ENCODE measurements at regions of chr11 and their contacts with region 1.

Region 1: DNA sequence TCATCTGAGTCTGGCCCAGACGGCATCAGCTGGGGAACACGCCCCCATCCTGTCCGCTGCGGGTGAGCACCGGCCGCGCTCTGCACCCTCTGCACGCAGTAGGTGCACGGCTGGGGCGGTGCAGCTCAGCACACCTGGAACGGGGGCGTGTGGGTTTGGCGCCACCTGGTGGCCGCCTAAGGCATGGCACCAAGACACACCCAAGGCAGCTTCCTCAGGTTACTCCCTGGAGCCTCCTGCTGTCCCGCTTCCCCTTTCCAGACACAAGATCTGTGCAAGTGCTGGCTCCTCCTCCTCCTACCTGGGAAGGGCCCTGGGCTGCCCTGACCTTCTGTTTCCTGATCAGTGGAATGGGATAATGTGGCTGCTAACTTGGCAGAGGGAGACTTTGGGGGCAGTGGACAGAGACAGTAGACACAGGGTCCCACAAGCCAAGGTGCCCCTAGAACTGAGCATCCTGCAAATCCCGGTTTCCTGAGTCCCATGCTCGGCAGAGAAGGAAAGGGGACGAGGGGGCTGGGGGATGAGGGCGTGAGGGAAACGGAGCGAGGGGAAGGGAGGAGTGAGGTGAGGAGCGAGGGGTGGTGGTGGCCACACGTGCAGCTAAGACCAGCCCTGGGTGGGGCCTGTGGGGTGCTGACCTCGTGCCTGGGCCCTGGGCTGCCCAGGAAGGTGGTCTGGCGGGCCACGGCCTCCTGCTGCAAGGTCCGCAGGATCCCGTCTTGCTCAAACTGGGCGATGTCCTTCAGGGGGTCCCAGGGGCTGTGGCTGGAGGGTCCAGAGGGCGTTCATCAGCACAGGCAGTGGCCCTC is 34.8 kb upstream of the CARS1 start:
- DNase-seq: peak; percentile 88 to 92
- H3K4me3 ChIP-seq: no peak overlapping the region
- H3K4me3 Mint-ChIP-seq: no peak overlapping the region
- H3K27ac Mint-ChIP-seq: no peak overlapping the region
- H3K4me1 ChIP-seq: no peaks in the 10 kb centered on the region
- H3K4me1 Mint-ChIP-seq: no peaks in the 10 kb centered on the region
- H3K27me3 ChIP-seq: no peaks in the 10 kb centered on the region
- H3K27me3 Mint-ChIP-seq: peaks cover 19% of the 10 kb centered on the region
- CTCF ChIP-seq: peak; percentile 98

Region 2: GRCh38 chr11:2489083-2489482 is 602.9 kb before region 1 on chr11:
- CTCF ChIA-PET with region 1: no interaction called
- POLR2A ChIA-PET with region 1: no interaction called
- intact Hi-C with region 1: no loop called
- DNase-seq: no peak
- H3K4me3 ChIP-seq: no peak overlapping the region
- H3K4me3 Mint-ChIP-seq: no peak overlapping the region
- H3K27ac Mint-ChIP-seq: no peak overlapping the region
- H3K4me1 ChIP-seq: no peaks in the 10 kb centered on the region
- H3K4me1 Mint-ChIP-seq: no peaks in the 10 kb centered on the region
- H3K27me3 ChIP-seq: no peaks in the 10 kb centered on the region
- H3K27me3 Mint-ChIP-seq: peaks cover 6% of the 10 kb centered on the region
- CTCF ChIP-seq: no peak

Region 3: DNA sequence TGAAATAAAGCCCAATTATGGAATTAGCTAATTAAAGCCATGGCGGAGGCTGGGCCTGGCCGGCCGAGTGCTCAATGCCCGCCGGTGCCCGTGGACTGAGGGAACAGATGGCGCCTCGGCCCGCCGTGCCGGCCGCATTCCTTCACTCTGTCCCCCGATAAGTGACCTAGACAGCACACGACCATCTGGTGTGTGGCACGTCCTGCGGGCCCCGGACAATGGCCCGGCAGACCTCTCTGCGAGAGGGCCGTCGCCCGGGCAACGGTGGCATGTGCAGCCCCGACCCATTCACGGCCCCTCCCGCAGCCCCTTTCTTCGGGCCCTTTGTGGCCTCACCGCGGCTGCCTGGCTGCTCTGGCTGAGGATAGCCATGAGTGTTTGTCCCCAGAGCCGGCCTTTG is 241.6 kb before region 1 on chr11:
- CTCF ChIA-PET with region 1: no interaction called
- POLR2A ChIA-PET with region 1: no interaction called
- intact Hi-C with region 1: no loop called
- DNase-seq: no peak
- H3K4me3 ChIP-seq: no peak overlapping the region
- H3K4me3 Mint-ChIP-seq: no peak overlapping the region
- H3K27ac Mint-ChIP-seq: no peak overlapping the region
- H3K4me1 ChIP-seq: peaks cover 6% of the 10 kb centered on the region; the same call in 1 of the 2 replicates
- H3K4me1 Mint-ChIP-seq: peaks cover 5% of the 10 kb centered on the region
- H3K27me3 ChIP-seq: no peaks in the 10 kb centered on the region
- H3K27me3 Mint-ChIP-seq: no peaks in the 10 kb centered on the region
- CTCF ChIP-seq: no peak

Region 4: DNA sequence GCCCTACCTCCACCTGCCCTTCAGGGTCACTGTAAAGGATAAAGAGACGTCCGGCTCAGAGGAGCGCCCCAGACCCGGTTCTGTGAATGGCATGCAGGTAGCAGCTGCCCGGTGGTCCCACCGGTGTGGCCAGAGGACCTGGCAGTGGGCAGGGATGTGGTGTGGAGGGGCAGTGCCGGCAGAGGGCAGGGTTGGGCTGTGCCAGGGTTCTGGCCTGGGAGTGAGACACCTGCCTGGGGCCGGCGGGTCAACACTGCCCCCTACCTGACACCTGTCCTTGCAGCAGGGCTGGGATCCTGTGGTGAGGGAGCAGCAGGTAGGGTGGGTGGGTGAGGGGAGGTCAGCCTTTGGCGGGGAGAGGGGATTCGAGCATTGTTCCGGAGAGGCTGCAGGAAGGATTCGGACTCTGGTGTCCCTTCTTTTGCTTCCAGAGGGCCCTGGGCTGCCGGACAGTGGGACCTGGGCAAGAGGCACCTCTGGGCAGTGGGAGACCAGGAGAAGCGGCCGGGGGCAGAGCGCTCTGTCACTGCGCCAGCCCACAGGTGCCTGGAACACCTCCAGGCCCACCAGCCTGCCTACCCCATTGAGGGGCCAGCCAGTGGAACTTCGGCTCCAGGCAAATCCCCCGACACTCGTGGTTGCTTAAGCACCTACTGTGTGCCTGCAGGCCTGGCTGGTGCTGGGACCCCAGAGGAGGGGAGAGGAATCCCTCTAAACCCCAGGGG is 161.1 kb before region 1 on chr11:
- CTCF ChIA-PET with region 1: interaction called, 9 read pairs
- POLR2A ChIA-PET with region 1: no interaction called
- intact Hi-C with region 1: loop called (anchors 5 kb)
- DNase-seq: peak; percentile 92 to 95
- H3K4me3 ChIP-seq: peak overlapping the region; percentile 91
- H3K4me3 Mint-ChIP-seq: peak overlapping the region; percentile 73
- H3K27ac Mint-ChIP-seq: peak overlapping the region; percentile 79
- H3K4me1 ChIP-seq: peaks cover 19% of the 10 kb centered on the region
- H3K4me1 Mint-ChIP-seq: no peaks in the 10 kb centered on the region
- H3K27me3 ChIP-seq: 0 out of 2 replicates have a peak, but pooled peaks cover 2% of the 10 kb centered on the region
- H3K27me3 Mint-ChIP-seq: no peaks in the 10 kb centered on the region
- CTCF ChIP-seq: peak; percentile 80 to 95

Region 5: GRCh38 chr11:2975594-2975993 is 116.4 kb before region 1 on chr11:
- CTCF ChIA-PET with region 1: interaction called, 12 read pairs
- POLR2A ChIA-PET with region 1: no interaction called
- intact Hi-C with region 1: no loop called
- DNase-seq: peak in 1 of 2 experiments; percentile 43
- H3K4me3 ChIP-seq: no peak overlapping the region
- H3K4me3 Mint-ChIP-seq: no peak overlapping the region
- H3K27ac Mint-ChIP-seq: no peak overlapping the region
- H3K4me1 ChIP-seq: no peaks in the 10 kb centered on the region
- H3K4me1 Mint-ChIP-seq: no peaks in the 10 kb centered on the region
- H3K27me3 ChIP-seq: no peaks in the 10 kb centered on the region
- H3K27me3 Mint-ChIP-seq: no peaks in the 10 kb centered on the region
- CTCF ChIP-seq: peak; percentile 54 to 67

Region 6: DNA sequence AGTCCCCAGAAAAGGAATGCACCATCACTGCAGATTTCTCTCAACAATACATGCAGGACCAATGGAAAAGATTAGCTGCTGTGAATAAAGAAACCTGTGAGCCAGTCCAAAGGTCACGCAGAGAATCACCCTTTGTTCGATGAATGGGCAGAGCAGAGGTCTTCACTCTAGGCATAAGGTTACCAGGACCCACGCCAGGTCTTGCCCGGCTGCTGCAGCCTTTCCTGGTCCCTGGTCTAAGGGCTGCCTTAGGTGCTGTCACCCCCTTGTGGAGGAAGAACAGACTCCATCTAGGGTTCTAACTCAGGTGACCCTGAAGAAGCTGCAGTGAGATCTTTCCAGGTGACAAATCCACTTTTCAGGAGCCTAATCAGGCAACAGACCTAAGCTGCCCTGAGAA is 70.9 kb before region 1 on chr11:
- CTCF ChIA-PET with region 1: interaction called, 7 read pairs
- POLR2A ChIA-PET with region 1: no interaction called
- intact Hi-C with region 1: loop called (anchors 5 kb)
- DNase-seq: peak in 1 of 2 experiments; percentile 59
- H3K4me3 ChIP-seq: no peak overlapping the region
- H3K4me3 Mint-ChIP-seq: no peak overlapping the region
- H3K27ac Mint-ChIP-seq: no peak overlapping the region
- H3K4me1 ChIP-seq: peaks cover 9% of the 10 kb centered on the region; the same call in 1 of the 2 replicates
- H3K4me1 Mint-ChIP-seq: peaks cover 24% of the 10 kb centered on the region
- H3K27me3 ChIP-seq: no peaks in the 10 kb centered on the region
- H3K27me3 Mint-ChIP-seq: no peaks in the 10 kb centered on the region
- CTCF ChIP-seq: peak; percentile 53 to 86

Region 7: GRCh38 chr11:3037040-3037944 is 54.7 kb before region 1 on chr11:
- CTCF ChIA-PET with region 1: interaction called, 83 read pairs
- POLR2A ChIA-PET with region 1: no interaction called
- intact Hi-C with region 1: loop called (anchors 1 kb)
- DNase-seq: peak; percentile 74 to 81
- H3K4me3 ChIP-seq: no peak overlapping the region
- H3K4me3 Mint-ChIP-seq: no peak overlapping the region
- H3K27ac Mint-ChIP-seq: no peak overlapping the region
- H3K4me1 ChIP-seq: no peaks in the 10 kb centered on the region
- H3K4me1 Mint-ChIP-seq: peaks cover 2% of the 10 kb centered on the region
- H3K27me3 ChIP-seq: no peaks in the 10 kb centered on the region
- H3K27me3 Mint-ChIP-seq: no peaks in the 10 kb centered on the region
- CTCF ChIP-seq: peak; percentile 88

Region 8: DNA sequence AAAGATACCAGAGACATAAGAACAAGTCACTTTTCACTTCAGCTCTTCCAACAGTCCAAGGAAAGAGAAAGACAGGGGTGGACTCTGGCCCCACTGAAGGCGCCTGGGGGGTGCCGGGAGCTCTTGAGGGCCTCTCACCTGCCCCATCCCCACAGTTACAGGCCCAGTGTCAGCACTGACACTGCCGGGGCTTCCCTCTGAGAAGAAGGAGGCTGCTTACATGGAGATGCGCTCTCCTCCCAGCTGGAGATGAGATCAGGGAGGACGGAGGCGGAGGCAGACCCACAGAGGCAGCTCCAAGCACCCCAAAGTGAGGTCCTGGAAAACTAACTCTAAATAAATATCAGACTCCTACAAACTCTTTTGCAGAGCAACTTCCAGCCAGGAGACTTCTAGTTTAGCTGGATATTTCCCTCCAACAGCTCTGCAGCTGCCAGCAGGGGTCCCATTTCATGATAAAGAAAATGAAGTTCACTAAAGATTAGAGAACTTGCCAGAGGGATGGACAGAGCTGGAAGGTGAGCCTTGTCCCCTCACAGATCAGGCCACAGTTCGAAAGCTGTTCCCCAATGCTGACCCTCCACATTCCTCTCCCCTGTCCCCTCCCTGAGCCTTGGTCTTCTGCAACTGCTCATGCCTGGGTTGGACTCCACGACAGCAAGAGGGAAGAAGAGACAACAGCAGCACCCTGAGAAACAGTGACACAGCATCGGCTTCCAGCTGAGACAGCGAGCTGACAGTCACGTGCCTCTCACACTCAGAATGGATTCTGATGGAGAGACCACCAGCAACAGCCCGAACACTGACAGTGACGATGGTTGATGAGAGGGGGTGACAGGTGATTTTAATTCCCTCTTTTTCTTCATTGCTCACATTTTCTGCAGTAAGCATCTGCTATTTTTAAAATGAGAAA is 40.5 kb before region 1 on chr11:
- CTCF ChIA-PET with region 1: interaction called, 8 read pairs
- POLR2A ChIA-PET with region 1: no interaction called
- intact Hi-C with region 1: loop called (anchors 1 kb)
- DNase-seq: no peak
- H3K4me3 ChIP-seq: no peak overlapping the region
- H3K4me3 Mint-ChIP-seq: no peak overlapping the region
- H3K27ac Mint-ChIP-seq: no peak overlapping the region
- H3K4me1 ChIP-seq: no peaks in the 10 kb centered on the region
- H3K4me1 Mint-ChIP-seq: no peaks in the 10 kb centered on the region
- H3K27me3 ChIP-seq: no peaks in the 10 kb centered on the region
- H3K27me3 Mint-ChIP-seq: no peaks in the 10 kb centered on the region
- CTCF ChIP-seq: peak in 1 of 2 experiments; percentile 19

Region 9: DNA sequence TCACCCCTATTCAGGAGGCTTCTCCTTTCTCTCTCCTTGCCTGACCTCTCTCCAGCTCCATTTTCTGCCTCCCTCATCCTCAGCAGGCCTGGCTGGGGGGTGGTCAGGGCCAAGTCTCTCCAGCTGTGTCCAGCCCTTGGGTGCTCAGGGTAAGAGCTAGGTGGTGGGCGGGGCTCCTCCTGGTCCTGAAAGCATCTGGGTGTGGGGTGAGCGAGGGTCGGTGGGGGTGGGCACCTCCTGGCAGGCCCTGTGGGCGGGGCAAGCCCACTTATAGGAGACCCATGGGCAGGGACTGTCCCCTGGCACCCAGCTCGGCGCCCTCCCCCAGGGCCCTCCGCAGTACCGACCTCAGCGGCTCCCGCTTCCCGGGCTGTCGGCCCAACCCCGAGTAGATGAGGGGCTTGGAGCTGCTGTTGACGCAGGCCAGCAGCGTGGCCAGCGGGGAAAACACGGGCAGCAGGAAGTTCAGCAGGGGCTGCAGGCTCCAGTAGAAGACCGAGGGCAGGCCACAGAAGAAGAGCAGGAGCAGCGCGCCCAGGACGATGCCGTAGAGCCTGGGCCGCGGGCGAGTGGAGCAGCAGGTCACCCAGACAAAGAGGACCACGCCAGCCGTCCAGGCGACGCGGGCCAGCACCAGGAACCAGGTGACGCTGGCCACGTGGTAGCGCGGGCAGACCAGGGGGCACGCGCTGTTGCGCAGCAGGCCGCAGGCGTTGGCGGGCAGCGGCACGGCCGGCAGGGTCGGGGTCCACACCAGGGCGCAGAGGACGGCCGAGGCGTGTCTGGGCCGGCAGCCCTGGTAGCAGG is 125.9 kb after region 1 on chr11:
- CTCF ChIA-PET with region 1: no interaction called
- POLR2A ChIA-PET with region 1: no interaction called
- intact Hi-C with region 1: loop called (anchors 5 kb)
- DNase-seq: peak in 1 of 2 experiments; percentile 29
- H3K4me3 ChIP-seq: no peak overlapping the region
- H3K4me3 Mint-ChIP-seq: no peak overlapping the region
- H3K27ac Mint-ChIP-seq: no peak overlapping the region
- H3K4me1 ChIP-seq: no peaks in the 10 kb centered on the region
- H3K4me1 Mint-ChIP-seq: no peaks in the 10 kb centered on the region
- H3K27me3 ChIP-seq: peaks cover 4% of the 10 kb centered on the region
- H3K27me3 Mint-ChIP-seq: peaks cover 44% of the 10 kb centered on the region
- CTCF ChIP-seq: no peak

Region 10: DNA sequence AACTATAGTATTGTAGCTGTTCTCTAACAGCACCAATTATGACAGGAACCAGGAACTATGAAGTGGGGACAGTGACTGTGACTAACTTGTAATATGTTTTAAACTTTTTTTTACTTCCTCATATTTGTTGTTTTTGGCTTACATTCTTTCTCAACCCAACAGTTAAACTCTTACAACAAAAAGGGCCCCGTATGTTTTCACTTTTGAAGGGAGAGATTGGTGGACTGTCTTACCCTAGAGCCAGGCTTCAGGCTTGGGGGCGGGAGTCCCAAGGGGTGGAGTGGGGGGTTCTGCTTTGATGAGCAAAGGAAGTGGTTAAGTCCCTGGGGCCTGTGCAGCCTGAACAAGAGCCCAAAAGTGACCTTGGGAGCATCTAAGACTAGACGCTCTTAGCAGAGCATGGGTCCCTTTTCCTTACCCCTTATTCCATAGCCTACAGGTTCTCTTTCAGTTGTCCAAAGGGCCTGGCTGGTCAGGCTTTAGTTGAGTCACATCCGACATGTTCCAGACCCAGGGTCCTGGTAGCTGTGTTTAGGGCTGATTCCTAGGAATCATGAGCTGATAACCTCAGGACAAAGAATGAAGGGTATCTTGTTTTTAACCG is 802.2 kb after region 1 on chr11:
- CTCF ChIA-PET with region 1: no interaction called
- POLR2A ChIA-PET with region 1: no interaction called
- intact Hi-C with region 1: no loop called
- DNase-seq: no peak
- H3K4me3 ChIP-seq: no peak overlapping the region
- H3K4me3 Mint-ChIP-seq: no peak overlapping the region
- H3K27ac Mint-ChIP-seq: no peak overlapping the region
- H3K4me1 ChIP-seq: no peaks in the 10 kb centered on the region; the same call in 1 of the 2 replicates
- H3K4me1 Mint-ChIP-seq: peaks cover 11% of the 10 kb centered on the region
- H3K27me3 ChIP-seq: no peaks in the 10 kb centered on the region
- H3K27me3 Mint-ChIP-seq: no peaks in the 10 kb centered on the region
- CTCF ChIP-seq: no peak

Measured in Caco-2 (cell line).